GM12878 (cell line): ENCODE measurements at regions of chr6 and their contacts with region 1.

Region 1: GRCh38 chr6:6588064-6588923 is at the start of gene LY86:
- DNase-seq: peak; percentile 97
- ATAC-seq: peak; percentile 54
- H3K4me3 ChIP-seq: peak within 1 kb of the TSS; percentile 83
- H3K27ac ChIP-seq: peak within 1 kb of the TSS; percentile 100
- H3K4me1 ChIP-seq: peaks cover 40% of the 10 kb centered on the region
- H3K27me3 ChIP-seq: no peaks in the 10 kb centered on the region
- CTCF ChIP-seq: peak in 1 of 3 experiments; percentile 23; a peak in 2 of 6 replicates
- EP300 ChIP-seq: peak; percentile 30 to 80; a peak in 3 of 4 replicates
- POLR2A ChIP-seq: peak; percentile 77
- RAD21 ChIP-seq: peak; percentile 21; the same call in 1 of the 2 replicates
- polyA plus RNA-seq, gene LY86: 306 to 457 TPM

Region 2: GRCh38 chr6:6331946-6332601 is 256.2 kb before region 1 on chr6:
- CTCF ChIA-PET with region 1: interaction called, 4 read pairs
- POLR2A ChIA-PET with region 1: interaction called, 14 read pairs
- RAD21 ChIA-PET with region 1: interaction called, 20 read pairs
- SMC1A ChIA-PET with region 1: interaction called, 8 read pairs
- in situ Hi-C with region 1: no loop called
- intact Hi-C with region 1: loop called (anchors 1 kb)
- DNase-seq: peak; percentile 95
- ATAC-seq: peak; percentile 81
- H3K4me3 ChIP-seq: peak overlapping the region; percentile 40; the same call in 1 of the 2 replicates
- H3K27ac ChIP-seq: peak overlapping the region; percentile 97
- H3K4me1 ChIP-seq: peaks cover 38% of the 10 kb centered on the region
- H3K27me3 ChIP-seq: no peaks in the 10 kb centered on the region
- CTCF ChIP-seq: no peak
- EP300 ChIP-seq: peak in 1 of 2 experiments; percentile 64; a peak in 3 of 4 replicates
- POLR2A ChIP-seq: no peak
- RAD21 ChIP-seq: 0 out of 2 replicates have a peak, but pooled peaks have one; percentile 3

Region 3: GRCh38 chr6:6556738-6557505 is 31.4 kb before region 1 on chr6:
- CTCF ChIA-PET with region 1: interaction called, 92 read pairs
- POLR2A ChIA-PET with region 1: interaction called, 14 read pairs
- RAD21 ChIA-PET with region 1: interaction called, 47 read pairs
- SMC1A ChIA-PET with region 1: interaction called, 24 read pairs
- in situ Hi-C with region 1: no loop called
- intact Hi-C with region 1: loop called (anchors 1 kb)
- DNase-seq: no peak
- ATAC-seq: peak; percentile 91
- H3K4me3 ChIP-seq: no peak overlapping the region
- H3K27ac ChIP-seq: no peak overlapping the region
- H3K4me1 ChIP-seq: no peaks in the 10 kb centered on the region; the same call in 1 of the 2 replicates
- H3K27me3 ChIP-seq: no peaks in the 10 kb centered on the region
- CTCF ChIP-seq: peak; percentile 82 to 92 (median 91)
- EP300 ChIP-seq: no peak
- POLR2A ChIP-seq: no peak
- RAD21 ChIP-seq: peak; percentile 84

Region 4: DNA sequence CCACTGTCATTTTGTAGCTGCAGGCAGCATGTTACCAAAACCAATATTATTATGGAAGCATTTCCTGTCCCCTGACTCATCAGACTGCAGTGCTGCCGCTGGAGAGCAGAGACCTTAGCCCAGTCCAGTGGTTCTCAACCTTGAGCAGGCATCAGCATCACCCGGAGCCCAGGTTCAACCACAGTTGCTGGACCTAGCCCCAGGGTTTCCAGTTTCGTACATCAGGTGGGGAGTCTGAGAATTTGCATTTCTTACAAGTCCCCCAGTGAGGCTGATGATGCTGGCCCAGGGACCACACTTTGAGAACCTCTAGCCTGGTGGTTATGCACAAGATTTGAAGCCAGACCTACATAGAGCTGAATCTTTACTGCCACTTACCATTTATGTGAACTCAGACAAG is 47.6 kb after region 1 on chr6:
- CTCF ChIA-PET with region 1: interaction called, 5 read pairs
- POLR2A ChIA-PET with region 1: interaction called, 25 read pairs
- RAD21 ChIA-PET with region 1: interaction called, 52 read pairs
- SMC1A ChIA-PET with region 1: interaction called, 19 read pairs
- in situ Hi-C with region 1: no loop called
- intact Hi-C with region 1: loop called (anchors 1 kb)
- DNase-seq: peak; percentile 43
- ATAC-seq: peak; percentile 79
- H3K4me3 ChIP-seq: 0 out of 2 replicates have a peak overlapping the region, but pooled peaks have one; percentile 18
- H3K27ac ChIP-seq: peak overlapping the region; percentile 57
- H3K4me1 ChIP-seq: peaks cover 30% of the 10 kb centered on the region
- H3K27me3 ChIP-seq: no peaks in the 10 kb centered on the region
- CTCF ChIP-seq: no peak
- EP300 ChIP-seq: 0 out of 4 replicates have a peak, but pooled peaks of 1 of the 2 experiments have one; percentile 15
- POLR2A ChIP-seq: no peak
- RAD21 ChIP-seq: no peak

Region 5: DNA sequence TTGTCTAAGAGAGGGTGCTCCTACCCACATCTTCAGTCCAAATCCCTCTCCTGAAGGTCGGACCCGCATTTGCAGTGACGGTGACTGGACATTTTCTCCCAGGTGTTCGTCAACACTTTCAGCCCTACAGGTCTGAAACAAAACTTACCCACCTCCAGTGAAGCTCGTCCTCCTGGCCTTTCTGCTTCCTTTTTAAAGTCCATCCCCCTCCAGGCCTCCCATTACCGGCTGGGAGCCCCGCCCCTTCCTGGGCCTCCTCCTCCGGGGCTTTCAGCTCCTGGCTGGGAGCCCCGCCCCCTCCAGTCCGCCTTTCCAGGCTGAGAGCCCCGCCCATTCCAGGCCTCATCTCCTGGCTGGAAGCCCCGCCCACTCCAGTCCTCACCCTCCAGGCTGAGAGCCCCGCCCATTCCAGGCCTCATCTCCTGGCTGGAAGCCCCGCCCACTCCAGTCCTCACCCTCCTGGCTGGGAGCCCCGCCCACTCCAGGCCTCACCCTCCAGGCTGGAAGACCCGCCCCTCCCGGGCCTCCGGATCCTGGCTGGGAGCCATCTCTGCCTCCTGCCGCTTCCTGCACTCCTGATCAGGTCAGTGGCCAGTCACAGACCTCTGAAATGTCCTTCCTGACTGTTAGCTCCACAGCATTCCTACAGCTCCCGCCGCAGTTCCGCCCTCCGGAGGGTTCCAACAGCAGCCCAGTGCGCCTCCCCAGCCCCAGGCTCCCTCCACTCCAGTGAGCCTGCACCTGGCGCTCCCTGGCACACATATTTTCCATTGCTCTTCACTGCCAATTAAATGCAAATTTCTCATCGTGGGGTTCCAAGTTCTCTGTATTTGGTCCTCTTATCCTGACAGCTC is 98.7 kb after region 1 on chr6:
- CTCF ChIA-PET with region 1: interaction called, 3 read pairs
- POLR2A ChIA-PET with region 1: interaction called, 5 read pairs
- RAD21 ChIA-PET with region 1: interaction called, 18 read pairs
- SMC1A ChIA-PET with region 1: interaction called, 30 read pairs
- in situ Hi-C with region 1: no loop called
- intact Hi-C with region 1: loop called (anchors 1 kb)
- DNase-seq: no peak
- ATAC-seq: no peak
- H3K4me3 ChIP-seq: no peak overlapping the region
- H3K27ac ChIP-seq: no peak overlapping the region
- H3K4me1 ChIP-seq: peaks cover 38% of the 10 kb centered on the region
- H3K27me3 ChIP-seq: no peaks in the 10 kb centered on the region
- CTCF ChIP-seq: no peak
- EP300 ChIP-seq: no peak
- POLR2A ChIP-seq: no peak
- RAD21 ChIP-seq: no peak

Region 6: GRCh38 chr6:7154341-7155139 is 566.2 kb after region 1 on chr6:
- CTCF ChIA-PET with region 1: no interaction called
- POLR2A ChIA-PET with region 1: no interaction called
- RAD21 ChIA-PET with region 1: no interaction called
- SMC1A ChIA-PET with region 1: no interaction called
- in situ Hi-C with region 1: no loop called
- intact Hi-C with region 1: loop called (anchors 5 kb)
- DNase-seq: peak; percentile 80
- ATAC-seq: peak; percentile 84
- H3K4me3 ChIP-seq: peak overlapping the region; percentile 58; the same call in 1 of the 2 replicates
- H3K27ac ChIP-seq: peak overlapping the region; percentile 93
- H3K4me1 ChIP-seq: peaks cover 80% of the 10 kb centered on the region
- H3K27me3 ChIP-seq: no peaks in the 10 kb centered on the region
- CTCF ChIP-seq: no peak
- EP300 ChIP-seq: peak; percentile 88 to 92; a peak in 3 of 4 replicates
- POLR2A ChIP-seq: peak; percentile 51; the same call in 1 of the 2 replicates
- RAD21 ChIP-seq: no peak

Region 7: DNA sequence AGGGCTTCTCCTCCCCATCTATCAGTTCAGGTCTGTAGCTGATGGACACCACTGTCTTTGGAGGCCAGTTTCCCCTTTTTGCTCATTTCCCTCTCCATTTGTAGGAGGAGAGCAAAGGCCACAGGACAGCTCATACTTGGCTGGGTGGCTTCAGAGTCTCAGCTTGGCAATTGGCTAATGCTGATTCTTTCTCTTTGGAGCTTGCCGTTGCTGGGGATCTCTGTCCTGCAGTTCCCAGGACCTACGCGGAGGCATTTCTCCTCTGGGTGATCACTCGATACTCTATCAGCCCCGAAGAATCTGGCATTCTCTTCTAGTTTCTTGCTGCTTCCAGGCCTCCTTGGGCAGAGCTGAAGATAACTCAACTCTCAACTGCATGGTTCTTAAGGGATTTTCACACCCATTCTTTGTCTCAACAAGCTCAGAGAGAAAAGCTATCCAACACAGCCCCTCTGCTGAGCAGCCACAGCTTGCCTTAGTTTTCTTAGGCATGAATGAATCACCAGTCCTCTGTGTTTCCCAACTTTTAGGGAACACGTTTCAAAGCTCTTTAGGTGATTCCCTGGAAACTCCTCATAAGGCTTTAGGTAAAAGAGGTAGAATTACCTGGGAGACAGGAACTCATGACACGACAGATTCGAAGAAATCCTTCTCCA is 743.9 kb after region 1 on chr6:
- CTCF ChIA-PET with region 1: no interaction called
- POLR2A ChIA-PET with region 1: no interaction called
- RAD21 ChIA-PET with region 1: no interaction called
- SMC1A ChIA-PET with region 1: no interaction called
- in situ Hi-C with region 1: no loop called
- intact Hi-C with region 1: no loop called
- DNase-seq: no peak
- ATAC-seq: no peak
- H3K4me3 ChIP-seq: no peak overlapping the region
- H3K27ac ChIP-seq: no peak overlapping the region
- H3K4me1 ChIP-seq: no peaks in the 10 kb centered on the region
- H3K27me3 ChIP-seq: no peaks in the 10 kb centered on the region; a peak in 1 of 4 replicates
- CTCF ChIP-seq: no peak
- EP300 ChIP-seq: no peak
- POLR2A ChIP-seq: no peak
- RAD21 ChIP-seq: no peak